Heart left ventricle (tissue), 16 donors: ENCODE measurements at regions of chr21 and their contacts with region 1.

Region 1: DNA sequence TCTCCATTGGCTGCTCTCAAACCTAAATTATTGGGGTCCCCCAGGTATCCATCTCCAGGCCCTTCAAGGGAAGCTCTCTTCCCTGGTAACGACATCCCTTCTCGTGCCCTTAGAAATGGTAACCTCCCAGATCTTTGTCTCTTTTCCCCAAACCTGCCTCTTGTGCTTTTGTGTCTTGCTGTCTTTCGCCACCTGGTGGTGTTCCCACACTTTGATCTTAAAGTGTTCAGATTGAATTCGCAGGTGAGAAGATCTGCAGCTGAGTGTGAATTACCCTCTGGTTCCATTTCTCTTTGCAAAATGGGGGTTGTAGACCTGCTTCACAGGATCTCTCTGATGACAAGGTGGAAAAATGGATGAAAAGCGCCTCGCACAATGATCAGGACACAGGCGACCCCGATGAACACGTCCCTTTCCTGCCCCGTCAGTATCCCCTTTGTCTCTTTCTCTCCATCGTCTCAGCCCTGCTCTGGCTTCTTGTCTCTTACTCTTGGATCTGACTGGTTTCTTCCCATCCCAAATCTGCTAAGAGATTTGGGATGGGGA is 53.1 kb downstream of the DOP1B start:
- DNase-seq: peak in 1 of 5 donors; percentile 30
- ATAC-seq: no peak
- H3K4me3 ChIP-seq: no peak overlapping the region
- H3K27ac ChIP-seq: no peak overlapping the region
- H3K4me1 ChIP-seq: peaks cover 0 to 6% (median 0%) of the 10 kb centered on the region in 12 donors
- H3K27me3 ChIP-seq: no peaks in the 10 kb centered on the region
- CTCF ChIP-seq: peak in 11 of 12 donors; percentile 30 to 62 (median 45)
- POLR2A ChIP-seq: no peak

Region 2: GRCh38 chr21:36135391-36136102 is 74.2 kb before region 1 on chr21:
- intact Hi-C with region 1: loop called in 5 of 10 experiments (anchors 2 to 5 kb)
- DNase-seq: peak; percentile 74 to 91 (median 82)
- ATAC-seq: peak; percentile 78 to 91 (median 88)
- H3K4me3 ChIP-seq: peak overlapping the region; percentile 42 to 94 (median 70)
- H3K27ac ChIP-seq: peak overlapping the region; percentile 72 to 95 (median 92)
- H3K4me1 ChIP-seq: peaks cover 3 to 44% (median 16%) of the 10 kb centered on the region in 12 donors
- H3K27me3 ChIP-seq: peaks cover 0 to 10% (median 0%) of the 10 kb centered on the region in 9 donors
- CTCF ChIP-seq: no peak
- POLR2A ChIP-seq: peak in 1 of 2 donors; percentile 78

Region 3: GRCh38 chr21:36141513-36141925 is 68.2 kb before region 1 on chr21:
- intact Hi-C with region 1: loop called in 6 of 10 experiments (anchors 1 to 5 kb)
- DNase-seq: peak in 4 of 5 donors; percentile 72 to 77 (median 76)
- ATAC-seq: peak; percentile 75 to 90 (median 83)
- H3K4me3 ChIP-seq: no peak overlapping the region
- H3K27ac ChIP-seq: no peak overlapping the region
- H3K4me1 ChIP-seq: peaks cover 0 to 13% (median 3%) of the 10 kb centered on the region in 12 donors
- H3K27me3 ChIP-seq: no peaks in the 10 kb centered on the region
- CTCF ChIP-seq: peak; percentile 70 to 89 (median 80)
- POLR2A ChIP-seq: no peak

Region 4: DNA sequence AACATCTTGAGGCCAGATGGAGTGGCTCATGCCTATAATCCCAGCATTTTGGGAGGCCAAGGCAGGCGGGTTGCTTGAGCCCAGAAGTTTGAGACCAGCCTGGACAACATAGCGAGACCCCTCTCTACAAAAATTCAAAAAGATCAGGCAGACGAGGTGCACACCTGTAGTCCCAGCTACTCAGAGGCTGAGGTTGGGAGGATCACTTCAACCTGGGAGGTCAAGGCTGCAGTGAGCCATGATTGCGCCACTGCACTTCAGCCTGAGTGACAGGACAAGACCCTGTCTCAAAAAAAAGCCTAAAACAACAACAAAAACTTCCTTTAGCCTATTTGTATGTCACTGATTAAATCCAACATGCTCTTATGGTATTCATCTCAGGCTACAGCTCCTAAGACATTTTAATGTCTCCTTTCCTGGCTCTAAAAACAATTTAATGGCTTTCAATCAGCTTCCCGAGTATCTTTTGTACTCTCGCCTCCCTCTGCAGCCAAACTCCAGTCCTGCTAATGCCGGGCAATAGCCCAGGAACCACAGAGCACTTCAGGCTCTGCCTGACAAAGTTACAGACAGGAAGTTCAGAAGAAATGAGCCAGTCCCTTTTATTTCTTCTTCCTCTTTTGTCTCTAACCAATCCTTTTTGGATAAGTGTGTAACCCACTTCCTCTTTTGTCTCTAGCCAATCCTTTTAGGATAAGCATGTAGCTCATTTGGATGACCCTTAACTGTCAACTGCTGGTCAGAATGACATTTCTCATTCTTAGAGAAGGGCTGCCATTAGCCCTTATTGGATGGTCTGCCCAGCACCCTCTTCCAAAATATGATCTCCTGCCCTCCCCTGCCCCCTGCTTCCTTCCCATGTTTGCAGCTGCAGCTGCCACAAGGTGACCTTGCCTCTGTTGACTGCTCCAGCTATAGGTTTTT is 59.6 kb before region 1 on chr21:
- intact Hi-C with region 1: loop called in 3 of 10 experiments (anchors 5 to 10 kb)
- DNase-seq: peak; percentile 48 to 68 (median 60)
- ATAC-seq: peak; percentile 68 to 90 (median 85)
- H3K4me3 ChIP-seq: peak overlapping the region in 1 of 12 donors; percentile 30
- H3K27ac ChIP-seq: peak overlapping the region; percentile 31 to 92 (median 74)
- H3K4me1 ChIP-seq: peaks cover 2 to 23% (median 14%) of the 10 kb centered on the region in 12 donors
- H3K27me3 ChIP-seq: no peaks in the 10 kb centered on the region
- CTCF ChIP-seq: no peak
- POLR2A ChIP-seq: no peak

Region 5: GRCh38 chr21:36156339-36156814 is 53.3 kb before region 1 on chr21:
- intact Hi-C with region 1: loop called in 3 of 10 experiments (anchors 5 to 10 kb)
- DNase-seq: peak; percentile 99 to 100 (median 100)
- ATAC-seq: peak; percentile 95 to 98 (median 96)
- H3K4me3 ChIP-seq: peak overlapping the region; percentile 87 to 99 (median 96)
- H3K27ac ChIP-seq: peak overlapping the region; percentile 71 to 94 (median 90)
- H3K4me1 ChIP-seq: peaks cover 0 to 34% (median 13%) of the 10 kb centered on the region in 12 donors
- H3K27me3 ChIP-seq: no peaks in the 10 kb centered on the region
- CTCF ChIP-seq: no peak
- POLR2A ChIP-seq: no peak

Region 6: DNA sequence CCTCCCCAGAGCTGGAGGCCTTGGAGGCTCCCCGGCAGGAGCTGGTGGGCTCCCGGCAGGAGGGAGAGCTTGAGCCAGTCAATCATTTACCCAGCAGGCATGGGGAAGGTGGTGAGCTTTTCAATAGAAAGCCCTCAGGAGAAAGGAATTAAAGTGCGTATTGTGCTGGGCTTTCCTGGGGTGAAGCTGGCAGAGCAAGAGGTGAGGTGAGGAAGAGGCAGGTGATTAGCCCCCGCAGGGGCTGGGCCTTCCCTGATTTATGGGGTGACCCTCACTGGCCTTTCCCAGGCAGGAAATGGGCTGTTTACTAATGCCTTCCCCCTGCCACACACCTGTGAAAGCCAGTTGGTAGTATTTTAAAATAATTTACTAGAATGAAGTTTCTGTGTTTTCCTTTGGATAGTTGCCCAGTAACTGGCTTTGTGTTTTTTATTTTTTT is 244.4 kb after region 1 on chr21:
- intact Hi-C with region 1: no loop called
- DNase-seq: no peak
- ATAC-seq: no peak
- H3K4me3 ChIP-seq: no peak overlapping the region
- H3K27ac ChIP-seq: no peak overlapping the region
- H3K4me1 ChIP-seq: peaks cover 0 to 13% (median 0%) of the 10 kb centered on the region in 12 donors
- H3K27me3 ChIP-seq: no peaks in the 10 kb centered on the region
- CTCF ChIP-seq: no peak
- POLR2A ChIP-seq: no peak